SK-N-SH (cell line): ENCODE measurements at regions of chr3 and their contacts with region 1.

Region 1: GRCh38 chr3:141192345-141192744 is 39.3 kb upstream of the PXYLP1 start:
- DNase-seq: peak; percentile 75
- H3K4me3 ChIP-seq: peak overlapping the region in 1 of 2 experiments; percentile 44; a peak in 1 of 4 replicates
- H3K27ac ChIP-seq: no peak overlapping the region
- H3K4me1 ChIP-seq: no peaks in the 10 kb centered on the region; a peak in 1 of 4 replicates
- H3K27me3 ChIP-seq: no peaks in the 10 kb centered on the region
- CTCF ChIP-seq: peak; percentile 98
- EP300 ChIP-seq: no peak
- RAD21 ChIP-seq: peak; percentile 98

Region 2: GRCh38 chr3:141006344-141006743 is 186.0 kb before region 1 on chr3:
- CTCF ChIA-PET with region 1: interaction called, 134 read pairs
- POLR2A ChIA-PET with region 1: no interaction called
- DNase-seq: no peak
- H3K4me3 ChIP-seq: no peak overlapping the region
- H3K27ac ChIP-seq: no peak overlapping the region
- H3K4me1 ChIP-seq: no peaks in the 10 kb centered on the region
- H3K27me3 ChIP-seq: no peaks in the 10 kb centered on the region
- CTCF ChIP-seq: no peak
- EP300 ChIP-seq: no peak
- RAD21 ChIP-seq: no peak

Region 3: DNA sequence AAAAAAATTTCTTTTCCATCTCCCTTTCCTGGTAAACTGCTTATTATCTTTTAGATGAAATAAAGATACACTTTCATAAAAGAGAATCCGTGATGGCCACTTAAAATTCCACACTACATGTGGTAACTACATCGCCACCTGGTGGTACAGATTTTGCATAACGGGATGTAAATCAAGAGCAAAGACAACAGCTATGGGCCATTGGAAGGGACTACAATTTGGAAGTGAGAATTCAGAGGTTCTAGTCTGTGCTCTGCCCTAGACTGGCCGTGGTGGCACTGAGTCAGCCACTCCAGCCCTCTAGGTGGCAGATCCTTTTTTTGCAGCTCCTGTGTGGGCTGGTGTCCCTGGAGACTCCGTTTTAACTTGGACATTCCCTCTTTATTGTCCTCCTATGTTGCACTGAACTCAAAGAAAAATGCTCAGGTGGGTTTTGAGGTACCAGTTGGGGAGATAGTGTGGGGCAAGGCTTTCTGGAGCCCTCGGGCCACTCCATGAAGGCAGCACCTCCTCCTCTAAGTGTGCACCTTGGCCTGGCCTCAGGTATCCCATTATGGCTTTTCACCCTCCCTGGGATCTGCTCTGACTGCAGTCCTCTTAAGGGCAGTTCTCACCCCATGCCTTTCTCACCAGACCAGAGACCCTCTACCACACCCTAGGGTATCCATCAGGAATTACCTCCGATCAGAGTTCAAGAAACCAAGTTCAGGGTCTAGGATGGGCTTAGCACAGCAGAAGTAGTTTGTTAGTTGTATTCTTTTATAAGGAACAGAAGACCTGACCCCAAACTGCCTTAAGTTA is 86.3 kb before region 1 on chr3:
- CTCF ChIA-PET with region 1: interaction called, 20 read pairs
- POLR2A ChIA-PET with region 1: no interaction called
- DNase-seq: peak; percentile 76
- H3K4me3 ChIP-seq: no peak overlapping the region; a peak in 1 of 4 replicates
- H3K27ac ChIP-seq: no peak overlapping the region
- H3K4me1 ChIP-seq: peaks cover 0 to 21% of the 10 kb centered on the region in 2 experiments; a peak in 1 of 4 replicates
- H3K27me3 ChIP-seq: no peaks in the 10 kb centered on the region
- CTCF ChIP-seq: peak; percentile 81
- EP300 ChIP-seq: no peak
- RAD21 ChIP-seq: peak; percentile 87

Region 4: DNA sequence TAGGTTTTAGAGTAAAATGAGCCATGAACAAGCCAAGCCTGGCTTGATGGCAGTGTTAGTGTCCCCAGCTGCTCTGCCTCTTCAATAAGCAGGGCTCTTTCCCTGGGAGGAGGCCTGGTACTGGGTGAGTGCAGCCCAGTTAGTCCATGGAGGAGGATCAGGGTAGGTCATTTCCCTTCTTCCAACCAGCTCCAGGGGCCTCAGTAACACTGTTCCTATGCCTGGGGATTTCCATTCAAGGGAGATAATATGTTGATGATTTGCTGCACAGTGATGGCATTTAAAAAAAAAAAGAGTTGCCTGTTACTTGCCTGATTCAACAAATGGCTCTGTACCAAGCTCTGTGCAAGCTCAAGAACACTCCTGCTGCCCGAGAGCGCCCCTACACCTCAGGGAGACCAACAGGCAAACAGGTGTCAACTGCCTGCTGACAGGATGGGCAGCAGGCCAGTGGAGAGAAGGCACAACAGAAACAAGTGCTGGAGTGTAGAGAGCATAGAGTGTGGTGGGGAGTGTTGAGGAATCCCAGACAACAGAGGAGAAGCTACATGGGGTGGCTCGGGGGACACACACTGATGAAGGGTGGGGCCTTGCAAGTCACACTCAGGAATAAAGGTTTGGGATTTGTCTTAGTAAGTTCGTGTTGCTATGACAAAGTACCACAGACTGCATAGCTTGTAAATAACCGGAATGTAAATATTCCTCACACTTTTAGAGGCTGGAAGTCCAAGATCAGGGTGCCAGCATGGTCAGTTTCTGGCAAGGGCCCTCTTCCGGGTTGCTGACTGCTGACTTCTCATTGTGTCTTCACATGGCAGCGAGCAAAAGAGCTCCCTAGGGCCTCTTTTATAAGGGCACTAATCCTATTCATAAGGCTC is 39.3 kb before region 1 on chr3:
- CTCF ChIA-PET with region 1: interaction called, 11 read pairs
- POLR2A ChIA-PET with region 1: no interaction called
- DNase-seq: no peak
- H3K4me3 ChIP-seq: no peak overlapping the region
- H3K27ac ChIP-seq: no peak overlapping the region
- H3K4me1 ChIP-seq: peaks cover 0 to 11% of the 10 kb centered on the region in 2 experiments; a peak in 1 of 4 replicates
- H3K27me3 ChIP-seq: no peaks in the 10 kb centered on the region
- CTCF ChIP-seq: no peak
- EP300 ChIP-seq: no peak
- RAD21 ChIP-seq: no peak

Region 5: GRCh38 chr3:141231101-141231935 is 39.0 kb after region 1 on chr3 and contains the start of gene PXYLP1:
- CTCF ChIA-PET with region 1: interaction called, 14 read pairs
- POLR2A ChIA-PET with region 1: no interaction called
- DNase-seq: peak; percentile 96
- H3K4me3 ChIP-seq: peak within 1 kb of the TSS; percentile 74 to 79
- H3K27ac ChIP-seq: peak within 1 kb of the TSS in 1 of 2 experiments; percentile 84; a peak in 2 of 4 replicates
- H3K4me1 ChIP-seq: peaks cover 5 to 57% of the 10 kb centered on the region in 2 experiments; a peak in 3 of 4 replicates
- H3K27me3 ChIP-seq: no peaks in the 10 kb centered on the region
- CTCF ChIP-seq: peak; percentile 58
- EP300 ChIP-seq: no peak
- RAD21 ChIP-seq: peak; percentile 57
- polyA plus RNA-seq, gene PXYLP1: 8.6 and 12.1 TPM in 2 replicates